ENCODE measurements at regions of chr14 and their contacts with region 1.

Region 1: GRCh38 chr14:73503648-73504047 is 12.9 kb downstream of the RIOX1 start:
- DNase-seq: peak in 2 of 5 donors; percentile 6 to 55
- H3K4me3 ChIP-seq: no peak overlapping the region
- H3K4me3 Mint-ChIP-seq: peak overlapping the region in 4 of 7 donors; percentile 1 to 55 (median 45)
- H3K27ac ChIP-seq: no peak overlapping the region
- H3K27ac Mint-ChIP-seq: peak overlapping the region in 7 of 8 donors; percentile 7 to 76 (median 29)
- H3K4me1 ChIP-seq: no peaks in the 10 kb centered on the region
- H3K4me1 Mint-ChIP-seq: peaks cover 2 to 18% (median 8%) of the 10 kb centered on the region in 3 donors
- H3K27me3 ChIP-seq: no peaks in the 10 kb centered on the region
- H3K27me3 Mint-ChIP-seq: no peaks in the 10 kb centered on the region

Region 2: GRCh38 chr14:73491256-73492042 is 12.2 kb before region 1 on chr14:
- CTCF ChIA-PET with region 1: interaction called, 14 read pairs
- POLR2A ChIA-PET with region 1: interaction called, 11 read pairs
- DNase-seq: peak; percentile 57 to 80 (median 67)
- H3K4me3 ChIP-seq: peak overlapping the region; percentile 85
- H3K4me3 Mint-ChIP-seq: peak overlapping the region; percentile 86 to 98 (median 87)
- H3K27ac ChIP-seq: peak overlapping the region; percentile 88
- H3K27ac Mint-ChIP-seq: peak overlapping the region in 7 of 8 donors; percentile 80 to 92 (median 88)
- H3K4me1 ChIP-seq: peaks cover 31% of the 10 kb centered on the region
- H3K4me1 Mint-ChIP-seq: peaks cover 43 to 61% (median 61%) of the 10 kb centered on the region in 3 donors
- H3K27me3 ChIP-seq: no peaks in the 10 kb centered on the region
- H3K27me3 Mint-ChIP-seq: no peaks in the 10 kb centered on the region

Region 3: GRCh38 chr14:73591690-73592448 is 88.2 kb after region 1 on chr14 and contains the start of gene ACOT4:
- CTCF ChIA-PET with region 1: interaction called, 3 read pairs
- POLR2A ChIA-PET with region 1: interaction called, 10 read pairs
- DNase-seq: peak; percentile 23 to 74 (median 68)
- H3K4me3 ChIP-seq: peak within 1 kb of the TSS; percentile 84
- H3K4me3 Mint-ChIP-seq: peak within 1 kb of the TSS; percentile 73 to 93 (median 80)
- H3K27ac ChIP-seq: peak within 1 kb of the TSS; percentile 75
- H3K27ac Mint-ChIP-seq: peak within 1 kb of the TSS; percentile 37 to 84 (median 80)
- H3K4me1 ChIP-seq: peaks cover 4% of the 10 kb centered on the region
- H3K4me1 Mint-ChIP-seq: peaks cover 9 to 21% (median 16%) of the 10 kb centered on the region in 3 donors
- H3K27me3 ChIP-seq: no peaks in the 10 kb centered on the region
- H3K27me3 Mint-ChIP-seq: peaks cover 0 to 1% of the 10 kb centered on the region in 2 donors
- total RNA-seq, gene ACOT4: 4.0 to 5.0 TPM

Region 4: GRCh38 chr14:73633116-73634010 is 129.7 kb after region 1 on chr14:
- CTCF ChIA-PET with region 1: interaction called, 29 read pairs
- POLR2A ChIA-PET with region 1: no interaction called
- DNase-seq: peak; percentile 30 to 70 (median 52)
- H3K4me3 ChIP-seq: peak overlapping the region; percentile 66
- H3K4me3 Mint-ChIP-seq: peak overlapping the region; percentile 67 to 90 (median 81)
- H3K27ac ChIP-seq: no peak overlapping the region
- H3K27ac Mint-ChIP-seq: peak overlapping the region in 5 of 8 donors; percentile 10 to 73 (median 49)
- H3K4me1 ChIP-seq: peaks cover 5% of the 10 kb centered on the region
- H3K4me1 Mint-ChIP-seq: peaks cover 5 to 7% (median 5%) of the 10 kb centered on the region in 3 donors
- H3K27me3 ChIP-seq: no peaks in the 10 kb centered on the region
- H3K27me3 Mint-ChIP-seq: peaks cover 3 to 20% of the 10 kb centered on the region in 2 donors

Region 5: GRCh38 chr14:73771848-73772638 is 268.4 kb after region 1 on chr14:
- CTCF ChIA-PET with region 1: no interaction called
- POLR2A ChIA-PET with region 1: no interaction called
- DNase-seq: peak; percentile 53 to 83 (median 68)
- H3K4me3 ChIP-seq: peak overlapping the region; percentile 28
- H3K4me3 Mint-ChIP-seq: peak overlapping the region; percentile 60 to 82 (median 71)
- H3K27ac ChIP-seq: peak overlapping the region; percentile 49
- H3K27ac Mint-ChIP-seq: peak overlapping the region; percentile 85 to 99 (median 94)
- H3K4me1 ChIP-seq: peaks cover 66% of the 10 kb centered on the region
- H3K4me1 Mint-ChIP-seq: peaks cover 68 to 83% (median 73%) of the 10 kb centered on the region in 3 donors
- H3K27me3 ChIP-seq: no peaks in the 10 kb centered on the region
- H3K27me3 Mint-ChIP-seq: no peaks in the 10 kb centered on the region